Activated CD4-positive, alpha-beta T cell treated with anti-CD3 and anti-CD28 coated beads, Interleukin-2, amount 10 ng/mL, durations not matched to agents 24 days and 14 days (primary cell): ENCODE measurements at regions of chr2 and their contacts with region 1.

Region 1: GRCh38 chr2:219160186-219161017 is at the start of gene NHEJ1:
- DNase-seq: peak; percentile 98
- H3K4me3 Mint-ChIP-seq: peak within 1 kb of the TSS; percentile 88
- H3K27ac Mint-ChIP-seq: peak within 1 kb of the TSS; percentile 97
- H3K4me1 Mint-ChIP-seq: peaks cover 20% of the 10 kb centered on the region
- H3K27me3 Mint-ChIP-seq: no peaks in the 10 kb centered on the region
- total RNA-seq, gene NHEJ1: 20.7 and 22.8 TPM in 2 replicates

Region 2: DNA sequence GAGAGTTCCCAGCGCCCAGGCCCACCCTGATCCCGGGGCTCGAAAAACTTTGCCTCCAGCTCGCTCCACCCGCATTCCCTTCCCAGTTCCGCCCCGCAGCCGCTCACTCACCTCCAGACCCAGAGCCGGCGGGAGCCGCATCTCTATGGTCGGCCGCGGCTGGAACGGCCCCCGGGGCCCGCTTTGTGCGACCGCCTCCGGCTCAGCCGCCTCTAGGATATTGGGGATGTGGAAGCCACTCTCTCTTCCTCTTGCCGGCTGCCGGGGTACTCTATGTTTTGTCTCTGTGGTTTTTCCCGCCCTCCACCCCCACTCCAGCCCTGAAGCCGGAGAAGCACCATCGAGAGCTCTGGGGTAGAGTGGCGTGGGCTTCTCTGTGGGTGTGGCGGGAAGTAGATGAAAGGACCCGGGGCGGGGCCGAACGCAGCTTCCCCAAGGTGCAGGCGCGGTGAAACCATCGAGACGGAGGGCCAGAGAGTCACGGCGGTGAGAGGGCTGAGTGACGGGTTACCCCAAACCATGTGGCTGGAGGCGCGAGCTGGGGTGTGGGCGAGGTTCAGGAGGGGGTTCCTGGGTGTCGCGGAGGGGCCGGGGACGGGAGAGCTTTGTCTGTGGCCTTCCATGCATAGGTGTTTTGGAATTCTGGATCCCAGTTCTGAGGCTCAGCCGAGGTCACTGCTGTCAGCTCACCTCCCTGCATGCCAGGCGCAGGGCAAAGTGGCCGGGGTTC is 501.0 kb before region 1 on chr2 and contains the starts of genes BCS1L and ZNF142:
- intact Hi-C with region 1: loop called (anchors 5 kb)
- DNase-seq: peak; percentile 98
- H3K4me3 Mint-ChIP-seq: peak within 1 kb of the TSS; percentile 98
- H3K27ac Mint-ChIP-seq: peak within 1 kb of the TSS; percentile 95
- H3K4me1 Mint-ChIP-seq: peaks cover 31% of the 10 kb centered on the region
- H3K27me3 Mint-ChIP-seq: no peaks in the 10 kb centered on the region
- total RNA-seq, gene BCS1L: 92.9 and 94.4 TPM in 2 replicates
- total RNA-seq, gene ZNF142: 59.6 and 60.9 TPM in 2 replicates

Region 3: DNA sequence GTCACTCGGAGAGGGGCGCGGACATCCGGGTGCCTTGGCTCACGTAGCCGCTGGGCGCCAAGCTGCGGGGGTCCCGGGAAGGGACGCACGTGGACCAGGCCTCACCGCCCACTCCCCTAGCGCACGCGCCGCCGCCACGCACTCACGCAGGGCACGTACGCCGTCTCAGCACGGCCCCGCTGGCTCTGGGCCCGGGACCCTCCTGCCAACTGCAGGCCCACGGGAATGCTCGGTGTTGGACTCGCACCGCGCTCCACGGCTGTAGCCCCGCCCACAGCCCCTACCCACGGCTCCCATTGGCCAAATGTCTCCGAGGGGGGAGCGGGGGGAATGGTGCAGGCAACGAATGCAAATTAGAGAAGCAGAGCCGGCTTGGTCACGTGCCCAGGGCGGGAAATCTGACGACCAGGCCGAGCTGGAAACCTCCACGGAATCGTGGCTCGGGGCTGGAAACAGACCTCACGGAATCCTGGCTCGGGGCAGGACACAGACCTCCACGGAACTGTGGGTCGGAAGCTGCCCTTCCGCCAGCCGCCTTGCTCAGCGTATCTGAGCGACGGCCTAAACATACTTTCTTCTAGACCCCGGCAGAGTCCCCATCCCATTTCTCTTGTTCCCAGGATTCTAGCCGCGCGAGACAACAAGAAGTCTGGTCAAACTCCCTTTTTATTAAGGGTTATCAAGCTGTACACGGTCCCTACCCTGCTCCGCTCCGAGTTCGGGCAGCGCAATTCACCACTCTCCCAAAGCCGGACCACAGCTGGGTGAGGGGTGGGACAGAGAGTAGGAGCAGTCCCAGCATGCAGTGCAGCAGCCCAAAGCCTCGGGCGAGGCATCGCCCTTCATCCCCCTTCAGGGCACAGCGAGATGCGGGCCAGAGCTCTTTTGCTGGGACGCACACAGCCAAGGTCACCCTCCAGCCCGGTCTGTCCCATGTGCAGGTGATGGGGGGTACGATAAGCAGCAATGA is 58.6 kb after region 1 on chr2 and contains the start of gene ABCB6:
- intact Hi-C with region 1: loop called (anchors 1 kb)
- DNase-seq: peak; percentile 96
- H3K4me3 Mint-ChIP-seq: peak within 1 kb of the TSS; percentile 91
- H3K27ac Mint-ChIP-seq: peak within 1 kb of the TSS; percentile 81
- H3K4me1 Mint-ChIP-seq: peaks cover 24% of the 10 kb centered on the region
- H3K27me3 Mint-ChIP-seq: no peaks in the 10 kb centered on the region
- total RNA-seq, gene ABCB6: 28.8 TPM in 2 replicates

Region 4: DNA sequence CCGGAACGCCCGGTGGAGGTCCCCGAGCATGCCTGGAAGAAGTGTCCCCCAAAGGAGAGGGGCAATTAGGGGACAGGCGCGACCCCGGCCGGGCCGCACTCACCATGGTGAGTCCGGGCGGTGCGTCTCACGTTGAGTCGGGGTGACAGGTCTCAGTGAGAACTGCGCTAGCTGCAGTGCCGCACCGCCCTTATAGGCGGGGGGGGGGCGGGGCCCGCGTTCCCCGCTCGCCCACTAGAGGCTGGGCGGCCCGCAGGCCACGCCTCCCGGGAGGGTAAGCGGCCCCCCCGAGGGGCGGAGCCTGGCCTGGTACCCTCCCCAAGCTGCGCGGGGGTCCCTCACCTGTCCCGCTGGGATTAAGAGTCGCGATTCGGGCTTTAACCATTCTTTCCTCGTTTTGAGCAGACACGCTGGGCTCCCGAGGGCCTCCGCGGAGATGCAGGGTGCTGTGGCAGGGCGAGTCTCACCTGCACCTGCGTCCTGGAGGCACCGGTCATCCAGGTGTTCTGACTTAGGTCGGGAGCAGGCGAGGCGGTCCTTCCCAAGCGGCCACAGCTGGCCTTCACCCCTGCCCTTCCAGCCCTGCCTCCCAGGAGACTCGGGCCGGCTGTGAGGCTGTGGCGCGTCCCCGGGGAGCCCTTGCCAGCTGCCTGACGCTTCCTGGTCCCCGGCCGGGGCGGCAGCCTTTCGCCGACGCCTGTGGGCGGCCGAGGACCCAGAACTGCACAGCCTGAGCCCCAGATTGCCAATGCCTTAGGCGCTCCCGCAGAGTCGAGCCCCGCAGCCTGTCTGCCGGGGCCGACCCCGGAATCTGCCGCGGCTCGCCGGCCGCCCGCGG is 93.6 kb after region 1 on chr2 and contains the start of gene TUBA4A:
- intact Hi-C with region 1: loop called (anchors 1 kb)
- DNase-seq: peak; percentile 97
- H3K4me3 Mint-ChIP-seq: peak within 1 kb of the TSS; percentile 80
- H3K27ac Mint-ChIP-seq: peak within 1 kb of the TSS; percentile 91
- H3K4me1 Mint-ChIP-seq: peaks cover 47% of the 10 kb centered on the region
- H3K27me3 Mint-ChIP-seq: no peaks in the 10 kb centered on the region
- total RNA-seq, gene TUBA4A: 235 and 240 TPM in 2 replicates

Region 5: DNA sequence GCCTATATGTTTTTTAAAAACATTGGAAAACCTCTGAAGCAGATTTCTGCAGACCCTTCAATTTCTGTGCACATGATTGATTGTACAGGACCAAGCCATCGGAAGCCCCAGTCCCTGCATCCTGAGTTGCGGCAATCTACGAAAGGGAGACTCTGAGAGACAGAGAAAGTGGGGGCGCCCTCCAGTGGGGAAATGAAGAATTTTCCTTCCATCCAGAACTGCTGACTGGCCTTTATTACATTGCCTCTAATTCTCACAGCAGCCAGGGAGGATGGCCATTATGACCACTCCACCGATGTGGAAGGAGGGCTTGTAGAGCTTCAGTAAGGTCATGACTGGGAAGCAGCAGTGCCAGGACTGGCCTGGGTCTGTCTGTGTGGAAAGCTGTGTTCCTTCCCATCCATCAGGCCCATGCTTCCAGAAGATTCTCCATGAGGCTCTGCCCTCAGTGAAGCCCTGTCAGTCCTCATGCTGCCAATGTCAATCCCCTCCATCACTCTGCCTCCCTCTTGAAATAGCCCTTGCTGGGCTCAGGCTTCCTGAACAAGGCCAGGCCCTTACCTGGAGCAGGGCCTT is 192.1 kb after region 1 on chr2:
- intact Hi-C with region 1: loop called (anchors 1 kb)
- DNase-seq: peak; percentile 90
- H3K4me3 Mint-ChIP-seq: no peak overlapping the region
- H3K27ac Mint-ChIP-seq: no peak overlapping the region
- H3K4me1 Mint-ChIP-seq: no peaks in the 10 kb centered on the region
- H3K27me3 Mint-ChIP-seq: peaks cover 36% of the 10 kb centered on the region

Region 6: DNA sequence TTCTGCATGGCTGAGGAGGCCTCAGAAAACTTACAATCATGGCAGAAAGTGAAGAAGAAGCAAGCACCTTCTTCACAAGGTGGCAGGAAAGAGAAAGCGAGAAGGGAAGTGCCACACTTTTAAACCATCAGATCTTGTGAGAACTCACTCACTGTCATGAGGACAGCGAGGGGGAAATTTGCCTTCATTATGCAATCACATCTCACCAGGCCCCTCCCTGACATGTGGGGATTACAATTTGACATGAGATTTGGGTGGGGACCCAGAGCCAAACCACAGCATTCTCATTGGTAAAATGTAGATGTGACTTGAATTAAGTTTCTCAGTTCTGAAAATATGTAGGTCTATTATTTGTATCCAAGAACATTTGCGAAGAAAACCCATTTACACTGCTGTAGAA is 1556.9 kb after region 1 on chr2:
- intact Hi-C with region 1: no loop called
- DNase-seq: no peak
- H3K4me3 Mint-ChIP-seq: no peak overlapping the region
- H3K27ac Mint-ChIP-seq: no peak overlapping the region
- H3K4me1 Mint-ChIP-seq: no peaks in the 10 kb centered on the region
- H3K27me3 Mint-ChIP-seq: no peaks in the 10 kb centered on the region